ENCODE measurements at regions of chr20 and their contacts with region 1.

Region 1: GRCh38 chr20:58753922-58754551 is 61.4 kb downstream of the NPEPL1 start:
- DNase-seq: no peak
- ATAC-seq: no peak
- H3K4me3 ChIP-seq: no peak overlapping the region
- H3K27ac ChIP-seq: no peak overlapping the region
- H3K4me1 ChIP-seq: no peaks in the 10 kb centered on the region
- H3K27me3 ChIP-seq: peaks cover 30% of the 10 kb centered on the region
- CTCF ChIP-seq: no peak
- POLR2A ChIP-seq: no peak
- RAD21 ChIP-seq: no peak

Region 2: GRCh38 chr20:56986476-56986875 is 1767.6 kb before region 1 on chr20:
- CTCF ChIA-PET with region 1: no interaction called
- POLR2A ChIA-PET with region 1: interaction called, 11 read pairs
- dilution Hi-C with region 1: no loop called
- in situ Hi-C with region 1: no loop called
- intact Hi-C with region 1: no loop called
- DNase-seq: no peak
- ATAC-seq: no peak
- H3K4me3 ChIP-seq: no peak overlapping the region
- H3K27ac ChIP-seq: no peak overlapping the region
- H3K4me1 ChIP-seq: no peaks in the 10 kb centered on the region
- H3K27me3 ChIP-seq: no peaks in the 10 kb centered on the region
- CTCF ChIP-seq: no peak
- POLR2A ChIP-seq: no peak
- RAD21 ChIP-seq: no peak

Measured in IMR-90 (cell line).